Tibial artery (tissue), 4 donors: ENCODE measurements at regions of chr18 and their contacts with region 1.

Region 1: GRCh38 chr18:10860928-10861327 is 288.4 kb downstream of the PIEZO2 start:
- DNase-seq: no peak
- H3K4me3 ChIP-seq: no peak overlapping the region
- H3K27ac ChIP-seq: no peak overlapping the region
- H3K4me1 ChIP-seq: no peaks in the 10 kb centered on the region
- H3K27me3 ChIP-seq: no peaks in the 10 kb centered on the region
- CTCF ChIP-seq: no peak

Region 2: DNA sequence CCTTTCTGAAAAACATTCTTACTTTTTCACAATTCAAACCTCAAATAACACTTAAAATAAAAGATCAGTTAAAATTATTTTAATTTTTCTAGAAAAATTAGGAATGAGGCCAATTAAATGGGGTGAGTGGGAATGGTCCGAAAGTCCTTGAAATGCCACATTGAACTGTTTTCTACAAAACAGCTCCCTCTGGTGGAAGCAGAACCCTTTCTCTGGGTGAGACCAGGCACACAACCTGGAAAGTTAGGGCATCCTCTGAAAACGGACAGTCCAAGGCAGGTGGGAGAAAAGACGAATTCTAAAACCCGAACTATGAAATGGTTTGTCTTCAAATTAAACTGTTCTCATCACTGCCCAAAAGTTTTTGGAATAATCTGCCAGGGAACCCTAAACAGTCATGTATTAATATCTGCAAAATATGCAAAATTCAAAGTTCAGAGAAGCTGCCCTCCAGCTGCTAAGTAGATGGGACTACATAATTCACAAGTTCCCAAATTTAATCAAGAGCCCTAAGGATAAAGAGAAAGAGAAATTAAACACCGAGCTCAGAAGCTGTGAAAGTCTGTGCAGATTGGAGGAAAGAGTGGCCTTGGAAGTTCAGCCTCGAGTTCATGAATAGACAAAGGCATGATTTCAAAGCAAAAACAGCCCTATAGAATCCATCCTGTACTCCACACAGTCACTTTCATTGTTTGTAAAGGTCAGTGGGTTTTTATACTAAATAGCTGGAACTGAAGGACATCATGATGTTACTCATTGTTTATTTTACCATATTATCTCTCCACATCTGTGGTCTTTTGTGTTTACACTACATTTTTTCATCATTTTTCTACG is 180.1 kb after region 1 on chr18:
- intact Hi-C with region 1: loop called (anchors 10 kb)
- DNase-seq: no peak
- H3K4me3 ChIP-seq: no peak overlapping the region
- H3K27ac ChIP-seq: no peak overlapping the region
- H3K4me1 ChIP-seq: no peaks in the 10 kb centered on the region
- H3K27me3 ChIP-seq: no peaks in the 10 kb centered on the region
- CTCF ChIP-seq: peak; percentile 63 to 68